ENCODE measurements at regions of chr3 and their contacts with region 1.

Region 1: GRCh38 chr3:10344147-10344943 is 23.4 kb upstream of the SEC13 start:
- DNase-seq: peak; percentile 5 to 44 (median 31)
- H3K4me3 ChIP-seq: no peak overlapping the region
- H3K4me3 Mint-ChIP-seq: no peak overlapping the region
- H3K27ac ChIP-seq: no peak overlapping the region
- H3K27ac Mint-ChIP-seq: no peak overlapping the region
- H3K4me1 ChIP-seq: no peaks in the 10 kb centered on the region
- H3K4me1 Mint-ChIP-seq: no peaks in the 10 kb centered on the region
- H3K27me3 ChIP-seq: no peaks in the 10 kb centered on the region
- H3K27me3 Mint-ChIP-seq: peaks cover 0 to 2% (median 2%) of the 10 kb centered on the region in 3 donors
- CTCF ChIP-seq: peak; percentile 98

Region 2: GRCh38 chr3:10310578-10310977 is 33.8 kb before region 1 on chr3:
- intact Hi-C with region 1: no loop called
- DNase-seq: no peak
- H3K4me3 ChIP-seq: no peak overlapping the region
- H3K4me3 Mint-ChIP-seq: no peak overlapping the region
- H3K27ac ChIP-seq: peak overlapping the region in 1 of 2 donors; percentile 53
- H3K27ac Mint-ChIP-seq: peak overlapping the region in 2 of 7 donors; percentile 55 to 69
- H3K4me1 ChIP-seq: no peaks in the 10 kb centered on the region
- H3K4me1 Mint-ChIP-seq: peaks cover 5% of the 10 kb centered on the region
- H3K27me3 ChIP-seq: no peaks in the 10 kb centered on the region
- H3K27me3 Mint-ChIP-seq: no peaks in the 10 kb centered on the region
- CTCF ChIP-seq: no peak

Region 3: DNA sequence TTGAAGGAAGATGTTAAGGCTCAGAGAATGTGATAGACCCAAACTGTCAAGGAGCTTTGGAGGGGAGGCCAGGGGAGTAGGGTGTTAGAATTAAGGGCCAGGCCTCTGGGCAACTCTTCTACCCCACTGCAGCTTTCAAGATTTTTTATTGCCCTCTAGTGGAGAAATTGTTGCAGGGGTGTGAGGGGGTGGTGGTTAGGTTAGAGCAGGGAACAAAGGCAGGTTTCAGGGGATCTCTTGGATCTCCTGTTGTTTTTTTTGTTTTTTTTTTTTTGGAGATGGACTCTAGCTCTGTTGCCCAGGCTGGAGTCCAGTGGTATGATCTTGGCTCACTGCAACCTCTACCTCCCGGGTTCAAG is 22.0 kb before region 1 on chr3:
- intact Hi-C with region 1: no loop called
- DNase-seq: peak in 2 of 3 donors; percentile 13 to 23
- H3K4me3 ChIP-seq: no peak overlapping the region
- H3K4me3 Mint-ChIP-seq: no peak overlapping the region
- H3K27ac ChIP-seq: no peak overlapping the region
- H3K27ac Mint-ChIP-seq: peak overlapping the region in 5 of 7 donors; percentile 21 to 96 (median 75)
- H3K4me1 ChIP-seq: peaks cover 16 to 22% of the 10 kb centered on the region in 2 donors
- H3K4me1 Mint-ChIP-seq: peaks cover 21% of the 10 kb centered on the region
- H3K27me3 ChIP-seq: no peaks in the 10 kb centered on the region
- H3K27me3 Mint-ChIP-seq: peaks cover 6 to 13% (median 6%) of the 10 kb centered on the region in 3 donors
- CTCF ChIP-seq: peak; percentile 39

Region 4: GRCh38 chr3:10417849-10418248 is 73.5 kb after region 1 on chr3:
- intact Hi-C with region 1: no loop called
- DNase-seq: no peak
- H3K4me3 ChIP-seq: no peak overlapping the region
- H3K4me3 Mint-ChIP-seq: no peak overlapping the region
- H3K27ac ChIP-seq: no peak overlapping the region
- H3K27ac Mint-ChIP-seq: no peak overlapping the region
- H3K4me1 ChIP-seq: no peaks in the 10 kb centered on the region
- H3K4me1 Mint-ChIP-seq: no peaks in the 10 kb centered on the region
- H3K27me3 ChIP-seq: no peaks in the 10 kb centered on the region
- H3K27me3 Mint-ChIP-seq: peaks cover 11 to 15% (median 13%) of the 10 kb centered on the region in 3 donors
- CTCF ChIP-seq: no peak

Region 5: DNA sequence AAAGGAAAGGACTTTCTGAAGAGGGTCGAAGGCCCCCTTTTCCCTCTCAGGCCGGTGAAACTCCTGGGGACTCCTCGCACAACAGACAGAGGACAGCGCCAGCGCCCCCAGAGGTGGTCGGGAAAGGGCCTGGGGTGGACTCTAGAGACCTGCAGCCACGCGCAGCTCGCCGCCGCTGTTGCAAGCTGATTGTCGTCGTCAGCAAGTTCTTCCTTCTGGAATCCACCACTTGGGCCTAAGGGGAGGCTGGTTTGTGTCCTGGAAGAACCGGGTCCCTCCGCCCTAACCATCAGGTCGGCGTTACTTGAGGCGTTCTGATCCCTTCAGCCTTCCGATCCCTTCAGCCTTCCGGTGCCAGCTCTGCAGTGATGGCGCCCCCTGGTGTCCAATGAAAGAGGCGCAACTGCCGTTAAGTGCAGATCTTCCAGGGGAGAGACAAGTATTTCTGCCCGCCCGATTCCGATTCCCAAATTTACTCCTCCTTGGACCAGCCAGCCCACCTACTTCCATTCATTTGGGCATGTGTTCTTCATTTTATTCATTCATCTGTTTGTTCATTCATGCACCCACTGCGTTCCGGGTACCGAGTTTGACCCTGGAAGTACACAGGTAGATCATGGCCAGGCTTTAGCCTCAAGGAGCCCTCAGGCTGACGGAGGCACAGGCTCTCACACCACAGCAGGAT is 394.5 kb after region 1 on chr3:
- intact Hi-C with region 1: loop called (anchors 2 to 5 kb)
- DNase-seq: peak; percentile 14 to 44 (median 21)
- H3K4me3 ChIP-seq: peak overlapping the region in 1 of 3 experiments; percentile 15
- H3K4me3 Mint-ChIP-seq: peak overlapping the region; percentile 65 to 79
- H3K27ac ChIP-seq: no peak overlapping the region
- H3K27ac Mint-ChIP-seq: peak overlapping the region in 1 of 7 donors; percentile 33
- H3K4me1 ChIP-seq: no peaks in the 10 kb centered on the region
- H3K4me1 Mint-ChIP-seq: peaks cover 11% of the 10 kb centered on the region
- H3K27me3 ChIP-seq: peaks cover 9 to 11% of the 10 kb centered on the region in 2 donors
- H3K27me3 Mint-ChIP-seq: peaks cover 18 to 30% (median 29%) of the 10 kb centered on the region in 3 donors
- CTCF ChIP-seq: peak; percentile 89

Measured in CD14-positive monocyte (primary cell).